Posterior vena cava (tissue), 2 donors: ENCODE measurements at regions of chr1 and their contacts with region 1.

Region 1: DNA sequence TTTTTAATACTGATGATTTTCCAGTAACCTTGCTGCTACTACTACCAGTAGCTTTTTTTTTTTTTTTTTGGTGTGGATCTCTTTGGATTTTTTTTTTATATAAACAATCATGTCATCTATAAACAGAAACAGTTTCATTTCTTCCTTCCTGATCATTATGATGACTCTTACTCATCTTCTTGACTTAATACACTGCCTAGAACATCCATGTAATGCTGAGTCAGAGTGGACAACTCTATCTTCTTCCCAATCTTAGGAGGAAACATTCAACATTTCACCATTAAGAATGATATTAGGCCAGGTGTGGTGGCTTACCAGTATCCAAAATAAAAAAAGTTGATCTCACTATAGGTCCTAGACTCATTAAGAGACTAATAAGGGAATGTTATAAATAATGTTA is 69.1 kb downstream of the RUSC1 start:
- DNase-seq: no peak

Region 2: GRCh38 chr1:155277070-155277895 is 112.5 kb before region 1 on chr1 and contains the start of gene HCN3:
- intact Hi-C with region 1: no loop called
- DNase-seq: peak; percentile 99
- total RNA-seq, gene HCN3: 1.4 to 1.5 TPM

Region 3: GRCh38 chr1:155323798-155324610 is 65.8 kb before region 1 on chr1:
- intact Hi-C with region 1: no loop called
- DNase-seq: peak; percentile 98

Region 4: DNA sequence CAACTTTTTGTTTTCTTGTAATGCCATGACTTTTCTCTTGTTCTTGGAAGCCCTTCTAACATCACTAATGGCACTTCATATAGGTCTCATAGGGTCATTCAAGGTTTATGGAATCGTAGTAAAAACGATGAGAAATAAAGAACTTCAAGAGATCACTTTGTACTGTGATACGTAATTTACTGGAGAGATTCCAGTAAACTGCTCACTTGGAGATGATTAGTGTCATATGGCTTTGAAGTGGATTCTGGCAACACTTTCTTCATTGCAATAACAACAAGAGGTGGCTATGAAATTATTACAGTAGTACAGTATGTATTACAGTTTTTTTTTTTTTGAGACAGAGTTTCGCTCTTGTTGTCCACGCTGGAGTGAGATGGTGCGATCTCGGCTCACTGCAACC is 34.3 kb after region 1 on chr1:
- intact Hi-C with region 1: loop called in 1 of 2 experiments (anchors 1 kb)
- DNase-seq: no peak

Region 5: DNA sequence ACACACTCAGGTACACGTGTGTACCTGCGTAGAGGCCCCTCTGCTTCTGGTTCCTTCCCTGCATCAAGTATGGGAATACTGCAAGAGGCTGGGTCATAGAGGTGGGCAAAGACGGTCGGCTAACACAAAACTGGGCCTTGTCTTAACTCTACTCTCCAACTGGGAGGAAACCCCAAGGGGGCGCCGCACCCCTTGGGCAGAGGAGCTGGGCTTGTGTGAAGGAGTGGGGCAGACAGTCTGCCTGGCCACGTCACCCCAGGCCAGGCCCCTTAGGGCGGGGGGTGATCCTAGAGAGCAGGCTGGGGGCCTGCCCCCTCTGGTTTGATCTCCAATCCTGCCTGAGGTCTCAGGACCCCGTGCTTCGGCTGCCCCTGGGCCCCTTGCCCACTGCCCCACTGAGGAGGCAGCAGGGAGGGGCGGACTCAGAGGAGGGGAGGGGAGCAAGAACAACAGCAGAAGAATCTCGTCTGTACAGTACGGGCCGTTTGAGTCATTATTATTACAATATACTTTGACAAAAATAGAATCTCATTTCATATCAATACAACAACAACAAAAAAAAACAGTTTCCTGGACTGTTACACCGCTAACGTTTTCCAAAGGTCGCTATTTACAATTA is 1076.0 kb after region 1 on chr1:
- intact Hi-C with region 1: no loop called
- DNase-seq: no peak